ENCODE measurements at regions of chr20 and their contacts with region 1.

Region 1: DNA sequence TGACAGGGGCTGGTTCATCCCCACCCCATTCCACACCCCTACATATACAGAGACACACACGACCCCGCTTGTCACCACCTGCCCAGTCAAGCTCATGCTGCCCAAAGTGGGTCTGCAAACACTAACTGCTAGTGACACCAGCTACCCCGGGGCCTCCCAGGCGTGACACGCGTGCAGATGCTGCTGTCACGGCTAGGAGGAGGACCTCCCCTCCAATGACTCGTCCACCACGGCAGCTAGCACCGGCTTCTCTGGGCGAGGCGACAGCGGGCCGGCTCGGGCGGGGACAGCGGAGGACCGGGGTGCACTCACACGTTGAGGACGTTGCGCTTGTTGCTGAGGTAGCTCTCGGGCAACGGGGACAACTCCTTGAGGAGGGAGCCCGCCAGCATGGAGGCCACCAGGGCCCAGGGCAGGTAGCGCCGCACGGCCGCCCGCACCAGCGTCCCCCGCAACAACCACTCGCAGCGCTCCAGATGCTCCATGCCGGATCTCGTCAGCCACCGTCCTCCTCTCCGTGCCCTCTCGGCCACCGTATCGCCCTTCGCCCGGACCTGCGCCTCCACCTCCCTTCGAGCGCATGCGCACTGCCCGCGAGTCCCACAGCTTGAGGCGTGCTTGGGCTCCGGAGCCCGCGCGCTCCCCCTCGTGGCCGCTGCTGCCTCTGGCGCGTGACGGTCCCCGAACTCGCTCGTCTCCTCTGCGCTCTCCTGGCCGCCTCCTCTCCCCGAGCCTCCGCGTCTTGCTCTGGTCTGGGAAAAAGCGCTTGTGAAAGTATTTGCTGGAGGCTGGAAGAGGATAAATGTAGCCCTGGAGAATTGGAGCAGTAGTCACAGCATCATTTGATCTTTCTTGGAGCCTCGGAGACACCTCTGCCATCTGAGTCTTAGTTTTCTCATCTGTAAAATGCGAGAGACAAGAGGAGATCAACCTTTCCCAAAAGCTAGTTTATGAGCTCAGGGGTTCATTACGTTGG is at the start of gene FITM2:
- H3K4me3 ChIP-seq: peak within 1 kb of the TSS; percentile 68
- H3K27ac ChIP-seq: peak within 1 kb of the TSS; percentile 37; the same call in 1 of the 2 replicates
- H3K4me1 ChIP-seq: no peaks in the 10 kb centered on the region
- CTCF ChIP-seq: peak; percentile 100

Region 2: GRCh38 chr20:44247131-44247571 is 63.8 kb before region 1 on chr20 and contains the start of gene GDAP1L1:
- CTCF ChIA-PET with region 1: interaction called, 10 read pairs
- POLR2A ChIA-PET with region 1: no interaction called
- H3K4me3 ChIP-seq: peak within 1 kb of the TSS; percentile 30
- H3K27ac ChIP-seq: no peak within 1 kb of the TSS
- H3K4me1 ChIP-seq: no peaks in the 10 kb centered on the region
- CTCF ChIP-seq: no peak

Region 3: GRCh38 chr20:44324343-44324742 is 13.4 kb after region 1 on chr20:
- CTCF ChIA-PET with region 1: interaction called, 26 read pairs
- POLR2A ChIA-PET with region 1: interaction called, 3 read pairs
- H3K4me3 ChIP-seq: no peak overlapping the region
- H3K27ac ChIP-seq: no peak overlapping the region
- H3K4me1 ChIP-seq: no peaks in the 10 kb centered on the region
- CTCF ChIP-seq: no peak

Region 4: DNA sequence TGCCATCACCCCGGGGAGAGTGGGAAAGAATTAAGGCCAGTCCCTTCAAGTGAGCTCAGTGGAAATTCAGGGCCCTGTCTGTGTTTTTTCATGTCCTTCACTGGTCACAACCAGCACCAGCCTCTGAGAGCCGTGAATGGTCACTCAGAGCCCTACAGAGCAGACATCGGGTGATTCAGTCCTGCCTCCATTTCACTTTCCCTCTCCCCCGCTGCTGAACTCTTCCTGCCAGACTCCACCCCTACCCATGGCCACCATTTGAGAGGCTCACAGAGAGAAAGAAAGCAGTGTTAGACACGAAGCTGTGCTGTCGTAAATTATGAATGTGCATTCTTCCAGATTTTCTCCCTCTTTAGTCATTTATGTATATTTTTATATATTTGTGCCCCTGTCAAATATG is 31.3 kb after region 1 on chr20:
- CTCF ChIA-PET with region 1: interaction called, 23 read pairs
- POLR2A ChIA-PET with region 1: no interaction called
- H3K4me3 ChIP-seq: no peak overlapping the region
- H3K27ac ChIP-seq: no peak overlapping the region
- H3K4me1 ChIP-seq: no peaks in the 10 kb centered on the region
- CTCF ChIP-seq: no peak

Region 5: DNA sequence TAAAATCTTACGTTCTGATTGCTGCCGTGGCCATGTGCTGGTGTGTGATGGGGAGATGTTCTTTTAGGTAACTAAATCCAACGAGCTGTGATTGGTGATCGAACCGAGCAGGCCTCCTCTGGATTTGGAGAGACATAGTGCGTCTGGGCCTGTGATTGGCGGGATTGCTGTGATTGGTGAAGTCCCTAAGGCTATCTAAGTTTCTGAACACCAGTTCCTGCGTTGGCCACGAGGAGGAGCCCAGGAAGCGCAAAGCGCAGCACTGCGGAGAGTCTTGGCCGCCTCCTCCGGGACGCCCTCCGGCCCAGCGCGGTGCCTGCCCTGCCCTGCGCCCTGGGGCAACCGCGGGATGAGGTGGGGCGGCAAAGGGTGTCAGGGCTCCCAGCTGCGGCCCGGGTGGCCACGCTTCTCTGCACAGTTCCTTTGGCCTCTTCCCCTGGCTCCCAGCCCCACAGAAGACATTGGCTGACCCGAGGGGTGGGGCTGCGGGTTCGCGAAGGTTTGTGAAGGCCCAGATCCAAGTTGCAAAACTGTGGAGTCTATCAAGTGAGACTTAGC is 77.6 kb after region 1 on chr20:
- CTCF ChIA-PET with region 1: interaction called, 13 read pairs
- POLR2A ChIA-PET with region 1: no interaction called
- H3K4me3 ChIP-seq: no peak overlapping the region
- H3K27ac ChIP-seq: no peak overlapping the region
- H3K4me1 ChIP-seq: no peaks in the 10 kb centered on the region
- CTCF ChIP-seq: peak; percentile 69; the same call in 1 of the 2 replicates